Cardiac septum (tissue), 1 donor: ENCODE measurements at regions of chr4 and their contacts with region 1.

Region 1: DNA sequence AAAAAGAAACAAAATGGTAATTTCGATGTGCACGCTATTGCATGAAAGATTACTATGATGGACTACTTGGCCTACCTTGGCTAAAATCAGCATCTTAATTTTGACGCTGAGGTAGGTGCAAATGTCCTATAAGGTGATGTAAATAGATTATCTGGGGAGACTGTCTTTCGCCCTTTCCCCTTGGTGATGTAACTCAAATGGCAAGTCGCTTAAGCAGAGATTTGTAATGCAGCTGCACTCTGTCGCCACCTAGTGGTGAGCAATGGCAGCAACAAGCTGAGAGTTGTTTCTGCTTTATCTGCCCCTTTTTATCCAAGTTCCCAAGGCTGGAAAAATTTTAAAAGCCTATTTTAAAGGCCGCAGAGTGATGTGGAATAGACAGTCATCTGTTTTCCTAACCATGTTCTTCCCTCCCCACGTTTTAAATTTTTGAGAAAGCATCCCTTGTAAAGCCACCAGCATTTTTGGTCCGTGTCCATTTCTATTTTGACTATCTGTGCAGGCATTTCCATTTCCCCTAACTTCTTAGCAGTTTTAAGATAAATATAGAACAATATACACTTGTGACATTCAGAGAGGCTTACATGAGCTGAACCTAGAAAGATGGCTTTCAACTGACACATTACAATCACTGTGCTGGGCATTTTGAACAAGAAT is 62.4 kb upstream of the PDLIM3 start:
- DNase-seq: peak; percentile 83

Region 2: GRCh38 chr4:185142912-185143595 is 454.6 kb before region 1 on chr4 and contains the start of gene SLC25A4:
- intact Hi-C with region 1: loop called (anchors 10 kb)
- DNase-seq: peak; percentile 94
- total RNA-seq, gene SLC25A4: 1,443 TPM

Region 3: DNA sequence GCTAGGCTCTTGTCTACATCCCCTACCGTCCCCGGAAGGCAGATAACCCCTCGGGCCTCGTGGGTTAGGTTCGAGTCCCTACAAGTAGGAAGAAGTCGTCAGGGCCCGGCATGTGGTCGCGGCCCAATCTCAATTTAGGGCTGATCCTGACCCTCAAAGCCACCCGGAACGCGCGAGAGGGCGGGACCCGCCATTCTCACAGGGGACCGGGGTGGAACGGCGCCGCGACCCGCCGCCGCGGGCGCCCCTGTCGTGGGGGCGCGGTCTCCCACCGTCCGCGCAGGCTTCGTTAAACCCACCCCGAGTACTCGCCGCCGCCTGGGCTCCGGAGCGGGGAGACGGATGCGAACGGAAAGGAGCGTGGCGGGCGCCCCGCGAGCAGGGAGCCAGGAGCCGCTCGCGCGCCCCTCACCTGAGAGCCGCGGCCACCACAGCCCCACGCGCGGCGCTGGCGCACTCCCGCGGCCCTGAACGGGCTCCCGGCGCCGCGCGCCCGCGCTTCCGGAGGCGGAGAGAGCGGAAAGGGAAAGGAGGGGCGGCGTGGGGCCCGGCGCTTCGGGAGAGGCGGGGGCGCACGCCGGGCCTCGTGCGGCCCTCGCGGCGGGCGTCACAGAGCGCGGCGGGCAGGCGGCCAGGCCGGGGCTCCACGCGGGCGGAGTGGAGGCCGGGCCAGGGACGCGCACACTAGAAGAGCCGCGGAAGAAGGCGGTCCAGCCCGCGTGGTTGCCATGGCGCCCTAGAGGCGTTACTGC is 394.0 kb before region 1 on chr4 and contains the start of gene CFAP97:
- intact Hi-C with region 1: loop called (anchors 10 kb)
- DNase-seq: peak; percentile 95
- total RNA-seq, gene CFAP97: 14.9 TPM

Region 4: DNA sequence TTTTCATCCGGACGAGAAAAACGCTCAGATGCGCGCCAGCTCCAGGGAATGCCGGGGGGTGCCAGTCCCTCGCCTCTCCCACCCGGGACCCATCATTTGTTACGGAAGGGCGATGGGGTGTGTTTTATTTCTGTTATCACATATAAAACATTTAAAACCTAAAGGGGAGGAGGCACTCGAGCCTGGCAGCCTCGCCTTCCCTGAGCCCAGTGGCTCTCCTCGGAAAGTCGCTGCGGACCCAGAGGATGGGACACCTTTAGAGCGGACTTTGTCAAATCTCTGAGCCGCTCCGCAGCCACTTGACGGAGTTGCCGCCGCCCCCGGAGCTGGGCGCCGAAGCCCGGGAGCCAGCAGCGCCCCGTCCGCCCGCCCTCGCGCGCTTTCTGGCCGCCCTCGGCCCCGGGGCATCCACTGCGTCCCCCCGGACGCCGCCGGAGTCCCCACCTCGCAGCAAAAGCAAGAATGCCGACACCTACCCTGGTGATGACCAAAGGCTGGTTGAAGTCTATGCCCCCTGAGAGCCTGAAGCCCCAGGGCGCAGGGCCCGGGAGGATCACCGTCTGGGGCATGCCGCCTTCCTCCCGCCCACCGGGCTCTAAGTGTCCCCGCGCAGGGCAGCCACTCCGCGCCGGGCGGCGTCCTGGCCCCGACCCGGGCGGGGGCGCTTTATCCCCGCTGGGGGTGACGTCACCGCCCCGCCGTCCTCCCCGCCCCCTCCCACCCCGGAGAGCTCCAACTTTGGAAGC is 62.6 kb before region 1 on chr4 and contains the start of gene PDLIM3:
- intact Hi-C with region 1: loop called (anchors 2 kb)
- DNase-seq: peak; percentile 83
- total RNA-seq, gene PDLIM3: 265 TPM